ENCODE measurements at regions of chr9 and their contacts with region 1.

Region 1: GRCh38 chr9:108178318-108178717 is 677.5 kb downstream of the ACTL7B start:
- DNase-seq: no peak
- ATAC-seq: no peak
- H3K4me3 ChIP-seq: no peak overlapping the region
- H3K27ac ChIP-seq: no peak overlapping the region
- H3K4me1 ChIP-seq: no peaks in the 10 kb centered on the region
- H3K27me3 ChIP-seq: no peaks in the 10 kb centered on the region
- CTCF ChIP-seq: no peak

Region 2: DNA sequence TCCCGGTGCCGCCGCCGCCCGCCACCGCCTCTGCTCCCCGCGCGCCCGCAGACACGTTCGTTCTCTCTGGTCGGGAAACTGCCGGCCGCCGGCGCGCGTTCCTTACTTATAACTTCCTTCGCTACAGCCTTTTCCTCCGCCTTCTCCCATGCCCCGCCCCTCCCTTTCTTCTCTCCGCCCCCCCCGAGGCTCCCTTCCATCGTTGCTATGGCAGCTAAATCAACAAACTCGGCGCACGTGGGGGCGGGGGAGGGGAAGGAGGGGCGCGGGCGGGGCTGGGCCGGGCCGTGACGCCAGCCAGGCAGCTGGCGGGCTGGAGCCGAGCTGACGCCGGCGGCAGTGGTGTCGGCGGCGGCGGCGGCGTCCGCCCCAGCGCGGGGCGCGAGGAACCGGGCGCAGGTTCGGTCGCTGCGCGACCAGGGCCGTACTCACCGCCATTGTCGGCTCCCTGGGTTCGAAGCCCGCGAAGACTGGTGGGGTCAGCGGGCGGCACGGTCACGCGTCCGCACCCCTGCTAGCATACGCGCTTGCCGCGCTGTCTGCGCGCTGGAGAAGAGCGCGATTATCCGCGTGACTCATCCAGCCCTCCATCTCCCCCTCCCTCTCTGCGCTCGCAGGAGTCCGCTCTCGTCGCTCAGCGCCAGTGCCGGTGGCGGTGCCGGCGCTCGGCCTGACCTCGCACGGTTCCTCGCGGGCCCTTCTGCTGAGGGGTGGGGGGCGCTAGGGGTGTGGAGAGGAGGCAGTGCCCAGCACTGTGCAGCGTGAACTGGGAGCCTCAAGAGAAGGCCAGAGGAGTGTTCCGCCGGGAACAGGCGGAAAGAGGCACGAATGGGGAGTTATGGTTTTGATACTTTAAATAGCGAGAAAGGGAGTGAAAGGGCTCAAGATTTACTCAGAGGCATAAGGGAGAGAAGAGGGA is 688.4 kb before region 1 on chr9 and contains the start of gene KLF4:
- intact Hi-C with region 1: no loop called
- DNase-seq: peak; percentile 90 to 94
- ATAC-seq: peak; percentile 87 to 90 (median 88)
- H3K4me3 ChIP-seq: peak within 1 kb of the TSS; percentile 94
- H3K27ac ChIP-seq: peak within 1 kb of the TSS; percentile 94
- H3K4me1 ChIP-seq: peaks cover 13% of the 10 kb centered on the region
- H3K27me3 ChIP-seq: no peaks in the 10 kb centered on the region
- CTCF ChIP-seq: no peak
- total RNA-seq, gene KLF4: 11.6 to 17.2 (median 14.7) TPM

Region 3: GRCh38 chr9:108239696-108240321 is 61.5 kb after region 1 on chr9:
- intact Hi-C with region 1: no loop called
- DNase-seq: no peak
- ATAC-seq: no peak
- H3K4me3 ChIP-seq: no peak overlapping the region
- H3K27ac ChIP-seq: no peak overlapping the region
- H3K4me1 ChIP-seq: no peaks in the 10 kb centered on the region
- H3K27me3 ChIP-seq: no peaks in the 10 kb centered on the region
- CTCF ChIP-seq: no peak

Region 4: DNA sequence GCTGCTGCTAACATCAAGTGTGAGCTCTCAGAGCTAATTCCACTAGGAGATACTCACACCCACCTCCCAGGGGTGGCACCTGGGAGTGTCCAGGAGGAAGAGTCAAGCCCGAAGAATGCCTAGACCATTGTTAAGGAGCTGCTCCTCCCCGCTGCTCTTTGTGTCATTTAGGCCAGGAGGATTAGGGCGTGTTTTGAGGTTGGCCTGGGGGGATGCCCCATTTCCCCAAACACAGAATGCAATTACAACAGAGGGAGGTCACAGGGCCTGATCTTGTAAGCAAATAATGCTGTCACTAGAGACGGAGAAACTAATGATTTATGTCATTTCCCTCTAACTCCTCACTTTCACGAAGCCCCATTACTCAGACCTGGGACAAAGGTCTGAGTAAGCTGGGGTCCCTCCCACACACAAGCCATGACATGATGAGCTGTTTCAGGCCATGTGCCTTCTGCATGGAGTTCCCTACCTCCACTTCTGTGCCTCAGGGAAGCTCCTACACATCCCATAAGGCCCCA is 365.0 kb after region 1 on chr9:
- intact Hi-C with region 1: loop called in 1 of 2 experiments (anchors 10 kb)
- DNase-seq: no peak
- ATAC-seq: no peak
- H3K4me3 ChIP-seq: no peak overlapping the region
- H3K27ac ChIP-seq: no peak overlapping the region
- H3K4me1 ChIP-seq: no peaks in the 10 kb centered on the region
- H3K27me3 ChIP-seq: no peaks in the 10 kb centered on the region
- CTCF ChIP-seq: no peak